Thyroid gland (tissue), 4 donors: ENCODE measurements at regions of chr12 and their contacts with region 1.

Region 1: DNA sequence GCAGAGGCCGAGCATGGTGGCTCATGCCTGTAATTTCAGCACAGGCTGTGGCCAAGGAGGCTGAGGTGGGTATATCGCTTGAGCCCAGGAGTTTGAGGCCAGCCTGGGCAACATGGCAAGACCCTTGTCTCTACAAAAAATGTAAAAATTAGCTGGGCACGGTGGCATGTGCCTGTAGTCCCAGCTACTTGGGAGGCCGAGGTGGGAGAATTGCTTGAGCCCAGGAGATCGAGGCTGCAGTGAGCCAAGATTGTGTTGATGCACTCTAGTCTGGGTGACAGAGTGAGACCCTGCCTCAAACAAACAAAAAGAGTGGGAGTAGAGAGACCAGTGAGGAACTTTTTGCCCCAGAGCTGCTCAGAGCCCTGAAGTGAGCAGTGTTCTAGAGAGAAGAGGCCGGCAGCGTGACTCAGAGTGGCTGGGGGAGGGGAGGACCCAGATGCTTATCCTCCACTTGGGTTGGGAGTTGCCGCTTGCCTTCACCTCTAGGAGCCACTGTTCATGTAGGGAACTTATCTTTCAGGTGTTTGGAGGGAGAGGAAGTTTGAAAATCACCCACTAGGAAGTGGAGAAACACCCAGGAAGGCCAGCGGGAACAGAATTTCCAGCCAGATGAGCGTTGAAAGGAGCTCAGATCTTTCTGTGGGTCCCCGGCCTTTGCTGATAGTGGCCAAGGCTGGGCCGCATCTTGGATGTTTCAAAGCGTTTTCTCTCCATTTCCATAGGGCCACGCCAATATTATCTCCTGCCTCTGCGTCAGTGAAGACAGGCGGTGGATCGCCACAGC is 15.3 kb downstream of the CFAP251 start:
- DNase-seq: peak; percentile 93 to 94
- H3K4me3 ChIP-seq: no peak overlapping the region
- H3K27ac ChIP-seq: peak overlapping the region; percentile 34 to 80 (median 72)
- H3K4me1 ChIP-seq: peaks cover 4 to 23% of the 10 kb centered on the region in 2 donors
- H3K27me3 ChIP-seq: no peaks in the 10 kb centered on the region
- CTCF ChIP-seq: peak in 4 of 6 experiments; percentile 21 to 41 (median 33)
- POLR2A ChIP-seq: no peak

Region 2: DNA sequence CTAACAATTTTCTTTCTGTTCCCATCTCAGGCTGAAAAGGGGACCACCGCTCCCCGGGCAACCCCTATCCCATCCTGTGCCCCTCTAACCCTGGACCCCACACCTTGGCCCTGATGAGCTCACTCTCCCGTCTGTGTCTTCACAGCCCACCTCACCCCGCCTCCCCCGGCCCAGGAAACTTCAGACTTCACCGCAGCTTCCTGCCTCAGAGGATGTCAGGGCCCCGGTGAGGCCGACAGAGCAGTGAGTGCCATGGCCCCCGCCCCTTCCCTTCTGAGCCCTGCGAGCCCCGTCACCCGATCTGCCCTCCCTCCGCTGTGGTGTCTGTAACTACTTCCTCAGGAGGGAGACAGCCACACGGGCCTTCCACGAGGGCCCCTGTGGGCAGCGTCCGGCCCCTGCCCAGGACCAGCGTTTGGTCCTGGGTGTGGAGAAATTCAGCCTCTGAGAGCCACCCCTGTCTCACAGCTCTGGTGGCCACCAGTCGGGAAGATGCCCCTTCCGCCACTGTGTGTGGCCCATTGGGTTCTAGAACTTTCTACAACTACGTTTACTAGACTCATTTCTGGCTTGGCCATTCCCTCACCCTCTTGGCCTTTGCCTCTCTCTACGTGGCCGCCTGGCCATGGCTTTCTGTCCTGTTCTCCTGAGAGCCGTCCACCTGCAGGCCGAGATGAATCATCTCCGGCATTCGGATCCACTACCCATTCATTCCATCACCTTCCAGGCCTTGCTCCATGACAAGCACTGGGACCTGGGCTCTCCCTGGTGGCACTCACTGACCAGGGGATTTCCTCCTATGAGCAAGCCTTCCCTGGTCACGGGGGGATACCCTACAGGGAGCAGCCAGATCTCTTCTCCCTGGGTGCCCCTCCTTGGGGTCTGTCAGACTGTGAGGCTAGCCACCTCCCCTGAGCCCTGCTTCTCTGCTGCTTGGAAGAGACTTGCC is 143.6 kb before region 1 on chr12:
- intact Hi-C with region 1: no loop called
- DNase-seq: peak in 1 of 2 donors; percentile 46
- H3K4me3 ChIP-seq: no peak overlapping the region
- H3K27ac ChIP-seq: peak overlapping the region; percentile 33 to 61 (median 48)
- H3K4me1 ChIP-seq: peaks cover 39 to 60% of the 10 kb centered on the region in 2 donors
- H3K27me3 ChIP-seq: no peaks in the 10 kb centered on the region
- CTCF ChIP-seq: no peak
- POLR2A ChIP-seq: no peak

Region 3: DNA sequence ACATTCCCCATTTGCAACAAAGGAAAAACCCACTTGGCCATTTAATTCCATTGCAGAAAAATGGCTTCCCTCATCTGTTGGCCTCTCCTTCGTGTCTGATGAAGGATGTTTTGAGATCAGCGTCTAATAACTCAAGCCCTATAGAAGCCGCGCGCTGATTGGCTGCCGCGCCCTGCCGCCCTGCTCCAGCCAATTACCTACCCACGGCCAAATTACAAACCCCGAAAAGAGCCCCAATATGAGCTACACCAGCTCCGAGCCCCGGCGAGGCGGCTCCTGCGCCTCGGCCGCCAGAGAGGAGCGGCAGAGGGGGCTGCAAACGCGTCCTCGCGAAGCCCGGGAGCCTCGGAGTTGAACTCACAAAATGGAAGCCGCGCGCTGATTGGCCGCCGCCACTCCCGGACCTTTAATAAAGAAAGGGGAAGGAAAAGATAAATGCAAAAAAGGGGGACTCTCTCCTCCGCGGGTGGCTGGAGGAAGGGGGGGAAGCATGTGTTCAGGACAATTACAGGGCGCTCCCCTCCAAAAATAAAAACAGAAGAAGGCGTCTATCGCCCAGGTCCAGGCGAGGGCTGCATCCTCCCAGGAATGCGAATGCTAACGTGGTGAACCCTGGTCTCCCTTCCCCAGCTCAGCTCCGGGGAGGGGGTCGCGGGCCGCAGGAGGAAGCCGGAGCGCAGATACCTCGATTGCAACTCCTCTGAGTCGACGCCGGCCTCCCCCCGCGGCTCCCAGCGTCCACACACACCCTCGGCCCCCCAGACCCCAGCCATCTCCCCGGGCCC is 130.7 kb before region 1 on chr12:
- intact Hi-C with region 1: no loop called
- DNase-seq: peak; percentile 89 to 93
- H3K4me3 ChIP-seq: peak overlapping the region; percentile 2 to 89 (median 58)
- H3K27ac ChIP-seq: peak overlapping the region; percentile 100
- H3K4me1 ChIP-seq: peaks cover 36 to 51% of the 10 kb centered on the region in 2 donors
- H3K27me3 ChIP-seq: no peaks in the 10 kb centered on the region
- CTCF ChIP-seq: no peak
- POLR2A ChIP-seq: peak; percentile 92 to 98

Region 4: DNA sequence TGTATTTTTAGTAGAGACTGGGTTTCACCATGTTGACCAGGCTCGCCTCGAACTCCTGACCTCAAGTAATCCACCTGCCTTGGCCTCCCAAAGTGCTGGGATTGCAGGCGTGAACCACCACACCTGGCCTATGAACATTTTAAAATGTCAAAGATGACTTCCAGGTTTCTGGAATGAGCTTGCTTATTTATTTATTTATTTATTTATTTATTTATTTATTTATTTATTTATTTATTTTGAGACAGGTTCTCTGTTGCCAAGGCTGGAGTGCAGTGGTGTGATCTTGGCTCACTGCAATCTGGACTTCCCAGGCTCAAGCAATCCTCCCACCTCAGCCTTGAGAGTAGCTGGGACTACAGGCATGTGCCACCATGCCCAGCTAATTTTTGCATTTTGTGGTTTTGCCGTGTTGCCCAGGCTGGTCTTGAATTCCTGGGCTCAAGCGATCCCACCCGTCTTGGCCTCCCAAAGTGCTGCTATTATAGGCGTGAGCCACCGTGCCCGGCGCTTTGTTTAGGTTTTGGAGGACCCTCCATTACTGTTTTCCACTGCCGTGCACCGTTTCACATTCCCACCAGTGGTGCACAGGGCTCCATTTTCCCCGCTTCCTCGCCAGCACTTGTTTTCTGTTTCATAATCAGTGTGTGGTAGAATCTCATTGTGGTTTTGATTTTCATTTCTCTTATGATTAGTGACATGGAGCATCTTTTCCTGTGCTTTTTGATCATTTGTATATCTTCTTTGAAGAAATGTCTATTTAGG is 21.7 kb before region 1 on chr12:
- intact Hi-C with region 1: no loop called
- DNase-seq: no peak
- H3K4me3 ChIP-seq: no peak overlapping the region
- H3K27ac ChIP-seq: no peak overlapping the region
- H3K4me1 ChIP-seq: no peaks in the 10 kb centered on the region
- H3K27me3 ChIP-seq: no peaks in the 10 kb centered on the region
- CTCF ChIP-seq: no peak
- POLR2A ChIP-seq: no peak

Region 5: GRCh38 chr12:121980191-121980891 is 46.6 kb after region 1 on chr12:
- intact Hi-C with region 1: no loop called
- DNase-seq: no peak
- H3K4me3 ChIP-seq: no peak overlapping the region
- H3K27ac ChIP-seq: no peak overlapping the region
- H3K4me1 ChIP-seq: no peaks in the 10 kb centered on the region
- H3K27me3 ChIP-seq: no peaks in the 10 kb centered on the region
- CTCF ChIP-seq: no peak
- POLR2A ChIP-seq: no peak

Region 6: GRCh38 chr12:122021822-122022526 is 88.3 kb after region 1 on chr12 and contains the start of gene BCL7A:
- intact Hi-C with region 1: loop called (anchors 10 kb)
- DNase-seq: peak; percentile 78 to 79
- H3K4me3 ChIP-seq: peak within 1 kb of the TSS; percentile 27 to 60 (median 39)
- H3K27ac ChIP-seq: peak within 1 kb of the TSS; percentile 91 to 97 (median 97)
- H3K4me1 ChIP-seq: peaks cover 20 to 33% of the 10 kb centered on the region in 2 donors
- H3K27me3 ChIP-seq: no peaks in the 10 kb centered on the region
- CTCF ChIP-seq: no peak
- POLR2A ChIP-seq: peak; percentile 21 to 88
- total RNA-seq, gene BCL7A: 18.3 to 27.2 (median 22.7) TPM